AG04450 (cell line): ENCODE measurements at regions of chr9 and their contacts with region 1.

Region 1: GRCh38 chr9:113468716-113469448 is 5.4 kb downstream of the RGS3 start:
- DNase-seq: no peak
- H3K4me3 ChIP-seq: no peak overlapping the region
- H3K27ac ChIP-seq: no peak overlapping the region
- H3K27me3 ChIP-seq: peaks cover under 1% of the 10 kb centered on the region
- CTCF ChIP-seq: no peak

Region 2: GRCh38 chr9:113427629-113428028 is 41.3 kb before region 1 on chr9:
- CTCF ChIA-PET with region 1: no interaction called
- POLR2A ChIA-PET with region 1: no interaction called
- DNase-seq: no peak
- H3K4me3 ChIP-seq: no peak overlapping the region
- H3K27ac ChIP-seq: no peak overlapping the region
- H3K27me3 ChIP-seq: peaks cover 39% of the 10 kb centered on the region
- CTCF ChIP-seq: no peak

Region 3: DNA sequence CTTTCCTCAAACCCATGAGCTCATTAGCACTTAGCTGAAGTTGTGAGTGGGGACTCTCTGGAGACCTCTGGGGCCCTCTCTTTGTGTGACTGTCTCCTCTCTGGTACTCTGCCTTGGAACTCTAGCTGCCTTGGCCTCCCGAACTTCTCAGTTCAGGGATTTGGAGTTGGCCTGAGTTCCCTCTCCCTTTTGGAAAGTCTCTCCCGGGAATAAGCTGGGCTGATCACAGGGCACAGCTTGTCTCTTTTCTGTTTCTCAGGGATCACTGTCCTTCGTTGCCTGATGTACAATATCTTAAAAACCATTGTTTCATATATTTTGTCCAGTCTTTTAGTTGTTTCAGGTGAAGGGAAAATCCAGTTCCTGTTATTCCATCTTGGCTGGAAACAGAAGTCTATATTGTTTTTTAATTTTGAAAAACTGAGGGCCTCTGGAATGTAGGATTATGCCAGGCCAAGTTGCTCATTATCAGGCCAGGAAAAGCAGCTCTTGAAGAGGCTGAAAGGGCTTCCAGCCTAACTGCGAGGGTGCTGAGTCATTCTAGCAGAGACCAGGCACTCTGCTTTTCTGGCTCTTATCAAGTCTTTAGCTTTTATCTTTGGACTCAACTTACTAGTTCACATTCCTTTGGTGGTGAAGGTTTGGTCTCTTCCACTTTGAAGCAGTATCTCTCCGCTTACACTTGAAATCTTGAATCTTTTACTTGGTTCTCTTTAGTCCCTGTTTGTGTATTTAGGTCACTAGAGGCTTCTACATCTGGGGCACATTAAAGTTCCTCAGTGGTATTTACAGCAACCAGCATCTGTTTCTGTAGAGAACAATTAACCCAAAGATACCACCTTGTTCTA is 13.7 kb before region 1 on chr9:
- CTCF ChIA-PET with region 1: interaction called, 8 read pairs
- POLR2A ChIA-PET with region 1: interaction called, 10 read pairs
- DNase-seq: peak; percentile 79
- H3K4me3 ChIP-seq: no peak overlapping the region
- H3K27ac ChIP-seq: peak overlapping the region; percentile 96
- H3K27me3 ChIP-seq: no peaks in the 10 kb centered on the region
- CTCF ChIP-seq: no peak